Activated CD4-positive, alpha-beta T cell treated with anti-CD3 and anti-CD28 coated beads for 36 hours (primary cell): ENCODE measurements at regions of chr15 and their contacts with region 1.

Region 1: GRCh38 chr15:25790000-25790660 is 73.0 kb downstream of the ATP10A start:
- DNase-seq: peak; percentile 78
- ATAC-seq: peak; percentile 98
- H3K4me3 Mint-ChIP-seq: no peak overlapping the region
- H3K27ac Mint-ChIP-seq: peak overlapping the region; percentile 65
- H3K4me1 Mint-ChIP-seq: peaks cover 62% of the 10 kb centered on the region
- H3K27me3 Mint-ChIP-seq: no peaks in the 10 kb centered on the region

Region 2: GRCh38 chr15:25766417-25766816 is 23.7 kb before region 1 on chr15:
- CTCF ChIA-PET with region 1: no interaction called
- POLR2A ChIA-PET with region 1: no interaction called
- intact Hi-C with region 1: no loop called
- DNase-seq: no peak
- ATAC-seq: no peak
- H3K4me3 Mint-ChIP-seq: no peak overlapping the region
- H3K27ac Mint-ChIP-seq: no peak overlapping the region
- H3K4me1 Mint-ChIP-seq: peaks cover 6% of the 10 kb centered on the region
- H3K27me3 Mint-ChIP-seq: no peaks in the 10 kb centered on the region

Region 3: GRCh38 chr15:25830844-25831451 is 40.8 kb after region 1 on chr15:
- CTCF ChIA-PET with region 1: interaction called, 3 read pairs
- POLR2A ChIA-PET with region 1: no interaction called
- intact Hi-C with region 1: loop called in 1 of 2 experiments (anchors 5 kb)
- DNase-seq: no peak
- ATAC-seq: no peak
- H3K4me3 Mint-ChIP-seq: no peak overlapping the region
- H3K27ac Mint-ChIP-seq: no peak overlapping the region
- H3K4me1 Mint-ChIP-seq: peaks cover 38% of the 10 kb centered on the region
- H3K27me3 Mint-ChIP-seq: no peaks in the 10 kb centered on the region

Region 4: GRCh38 chr15:25905140-25905539 is 115.0 kb after region 1 on chr15:
- CTCF ChIA-PET with region 1: no interaction called
- POLR2A ChIA-PET with region 1: no interaction called
- intact Hi-C with region 1: loop called in 1 of 2 experiments (anchors 1 kb)
- DNase-seq: peak; percentile 72
- ATAC-seq: peak; percentile 94
- H3K4me3 Mint-ChIP-seq: no peak overlapping the region
- H3K27ac Mint-ChIP-seq: peak overlapping the region; percentile 74
- H3K4me1 Mint-ChIP-seq: peaks cover 16% of the 10 kb centered on the region
- H3K27me3 Mint-ChIP-seq: no peaks in the 10 kb centered on the region

Region 5: GRCh38 chr15:26082221-26083109 is 292.3 kb after region 1 on chr15:
- CTCF ChIA-PET with region 1: no interaction called
- POLR2A ChIA-PET with region 1: no interaction called
- intact Hi-C with region 1: loop called in 1 of 2 experiments (anchors 10 kb)
- DNase-seq: peak; percentile 97
- ATAC-seq: peak; percentile 99
- H3K4me3 Mint-ChIP-seq: peak overlapping the region; percentile 84
- H3K27ac Mint-ChIP-seq: peak overlapping the region; percentile 95
- H3K4me1 Mint-ChIP-seq: peaks cover 32% of the 10 kb centered on the region
- H3K27me3 Mint-ChIP-seq: no peaks in the 10 kb centered on the region